ENCODE measurements at regions of chr20 and their contacts with region 1.

Region 1: DNA sequence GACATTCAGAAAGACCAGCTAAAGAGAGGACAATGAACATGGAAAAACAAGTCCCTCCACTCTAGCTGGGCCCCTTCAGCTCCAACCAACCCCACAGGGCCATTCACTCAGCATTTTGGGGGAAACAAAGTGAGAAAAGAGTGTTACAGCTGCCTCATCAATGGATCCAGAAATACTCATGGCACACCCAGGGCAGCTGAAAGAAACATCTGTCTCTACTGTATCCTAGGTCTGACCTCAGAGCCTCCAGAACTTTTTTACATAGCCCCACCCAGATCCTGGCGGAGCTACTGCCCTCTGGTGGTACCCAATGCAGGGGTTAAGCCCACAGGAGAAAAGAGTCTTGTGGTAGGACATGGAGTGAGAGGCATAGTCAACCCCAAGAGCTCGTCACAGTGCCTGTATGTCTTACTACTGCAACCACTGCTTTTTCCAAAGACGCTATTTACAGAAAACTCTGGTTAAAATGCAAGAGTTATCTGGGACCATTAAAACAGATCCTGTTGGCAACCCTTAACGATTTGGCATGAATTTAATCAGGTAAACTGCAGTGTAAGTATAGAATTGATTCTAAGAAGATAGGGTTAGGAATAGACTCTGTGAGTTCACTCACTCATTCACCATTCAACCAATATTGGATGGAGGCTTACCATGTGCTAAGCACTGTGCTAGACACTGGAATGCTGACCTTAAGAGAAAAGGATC is 37.4 kb upstream of the FAM83C start:
- DNase-seq: peak; percentile 60
- ATAC-seq: peak; percentile 90
- H3K4me3 Mint-ChIP-seq: no peak overlapping the region
- H3K27ac Mint-ChIP-seq: no peak overlapping the region
- H3K4me1 Mint-ChIP-seq: peaks cover 3% of the 10 kb centered on the region
- H3K27me3 Mint-ChIP-seq: no peaks in the 10 kb centered on the region

Region 2: DNA sequence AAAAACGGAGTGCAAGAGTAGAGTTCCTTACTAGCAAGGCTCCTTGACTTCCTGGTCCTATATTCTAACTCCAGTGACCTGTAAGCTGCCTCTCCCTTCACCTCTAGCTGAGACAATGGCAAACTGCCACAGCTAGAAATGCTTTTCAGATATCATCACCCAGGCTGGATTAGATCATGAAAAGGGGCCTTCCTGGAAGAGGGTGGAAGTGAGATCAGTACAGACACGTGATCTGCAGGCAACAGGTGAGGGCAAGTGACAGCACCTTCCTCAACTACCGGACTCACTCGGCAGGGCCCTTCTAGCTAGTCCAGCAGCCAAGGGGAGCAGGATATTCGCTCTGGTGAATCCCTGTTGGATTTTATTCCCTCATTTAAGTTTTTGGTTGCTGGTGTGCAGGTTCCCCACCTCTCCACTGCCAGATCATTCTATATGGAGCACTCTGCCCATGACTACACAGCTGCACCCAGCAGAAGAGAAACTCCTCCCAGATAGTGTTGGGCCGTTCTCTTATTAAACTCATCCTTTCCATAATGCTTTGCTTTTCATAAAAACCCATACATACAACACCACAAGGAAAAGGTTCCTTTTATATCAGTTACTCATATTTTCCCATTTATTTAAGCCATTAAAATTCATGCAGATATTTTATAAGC is 11.0 kb before region 1 on chr20:
- CTCF ChIA-PET with region 1: interaction called, 15 read pairs
- POLR2A ChIA-PET with region 1: interaction called, 3 read pairs
- DNase-seq: no peak
- ATAC-seq: no peak
- H3K4me3 Mint-ChIP-seq: no peak overlapping the region
- H3K27ac Mint-ChIP-seq: peak overlapping the region; percentile 41
- H3K4me1 Mint-ChIP-seq: peaks cover 35% of the 10 kb centered on the region
- H3K27me3 Mint-ChIP-seq: no peaks in the 10 kb centered on the region

Region 3: GRCh38 chr20:35344354-35344837 is 14.8 kb after region 1 on chr20:
- CTCF ChIA-PET with region 1: interaction called, 12 read pairs
- POLR2A ChIA-PET with region 1: no interaction called
- DNase-seq: no peak
- ATAC-seq: no peak
- H3K4me3 Mint-ChIP-seq: no peak overlapping the region
- H3K27ac Mint-ChIP-seq: no peak overlapping the region
- H3K4me1 Mint-ChIP-seq: no peaks in the 10 kb centered on the region
- H3K27me3 Mint-ChIP-seq: no peaks in the 10 kb centered on the region

Region 4: DNA sequence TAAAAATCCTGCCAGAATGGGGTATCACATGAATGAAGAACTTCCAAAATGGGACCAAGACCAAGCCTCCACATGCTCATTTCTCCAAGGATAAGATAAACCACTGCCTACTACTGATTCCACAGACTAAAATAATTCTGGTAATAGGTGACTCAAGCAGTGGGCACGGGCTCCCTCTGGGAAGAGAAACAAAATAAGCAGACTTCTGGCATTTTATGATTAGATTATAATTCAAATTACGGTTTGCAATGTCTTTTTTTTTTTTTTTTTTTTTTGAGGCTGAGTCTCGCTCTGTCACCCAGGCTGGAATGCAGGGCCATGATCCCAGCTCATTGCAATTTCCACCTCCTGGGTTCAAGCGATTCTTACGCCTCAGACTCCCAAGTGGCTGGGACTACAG is 66.1 kb after region 1 on chr20:
- CTCF ChIA-PET with region 1: no interaction called
- POLR2A ChIA-PET with region 1: no interaction called
- DNase-seq: no peak
- ATAC-seq: no peak
- H3K4me3 Mint-ChIP-seq: no peak overlapping the region
- H3K27ac Mint-ChIP-seq: no peak overlapping the region
- H3K4me1 Mint-ChIP-seq: peaks cover 14% of the 10 kb centered on the region
- H3K27me3 Mint-ChIP-seq: no peaks in the 10 kb centered on the region

Measured in activated CD8-positive, alpha-beta T cell treated with anti-CD3 and anti-CD28 coated beads, Interleukin-2, amount 10 ng/mL, durations not matched to agents 7 days and 5 days (primary cell).